HEK293 (cell line): ENCODE measurements at regions of chr2 and their contacts with region 1.

Region 1: GRCh38 chr2:28142386-28142785 is 250.3 kb upstream of the FOSL2 start:
- H3K4me3 ChIP-seq: no peak overlapping the region
- H3K27ac ChIP-seq: no peak overlapping the region
- H3K4me1 ChIP-seq: peaks cover 12% of the 10 kb centered on the region
- CTCF ChIP-seq: no peak

Region 2: GRCh38 chr2:28155627-28156026 is 13.2 kb after region 1 on chr2:
- CTCF ChIA-PET with region 1: interaction called, 12 read pairs
- POLR2A ChIA-PET with region 1: no interaction called
- H3K4me3 ChIP-seq: no peak overlapping the region
- H3K27ac ChIP-seq: no peak overlapping the region
- H3K4me1 ChIP-seq: peaks cover 6% of the 10 kb centered on the region; the same call in 1 of the 2 replicates
- CTCF ChIP-seq: no peak